Motor neuron (in vitro differentiated cells): ENCODE measurements at regions of chr12 and their contacts with region 1.

Region 1: DNA sequence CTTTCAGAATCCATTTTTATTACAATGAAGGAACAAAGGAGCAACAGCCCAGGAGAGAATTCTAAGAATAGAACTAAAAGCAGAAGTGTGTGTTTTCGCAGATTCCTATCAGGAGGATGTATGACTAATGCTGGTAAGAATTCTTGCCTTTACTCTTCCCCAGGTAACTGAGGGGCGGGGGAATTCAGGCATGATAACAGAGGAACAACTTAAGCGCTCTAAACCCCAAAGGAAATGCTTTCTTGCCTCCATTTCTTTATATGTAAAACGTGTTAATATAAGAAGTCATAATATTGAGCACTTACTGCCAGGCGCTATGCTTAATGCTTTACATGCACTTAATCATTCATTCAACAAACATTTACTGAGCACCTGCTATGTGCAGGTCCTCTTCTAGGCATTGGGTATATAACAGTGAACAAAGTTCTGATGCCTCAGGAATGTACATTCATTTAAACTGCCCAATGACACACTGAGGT is 4.5 kb downstream of the HCAR1 start:
- ATAC-seq: no peak
- H3K4me3 ChIP-seq: no peak overlapping the region
- H3K27ac ChIP-seq: no peak overlapping the region
- H3K4me1 ChIP-seq: no peaks in the 10 kb centered on the region

Region 2: GRCh38 chr12:122646517-122647217 is 79.5 kb before region 1 on chr12:
- in situ Hi-C with region 1: loop called in 1 of 9 experiments (anchors 25 kb)
- ATAC-seq: peak in 3 of 8 experiments; percentile 73 to 91 (median 76)
- H3K4me3 ChIP-seq: no peak overlapping the region
- H3K27ac ChIP-seq: no peak overlapping the region
- H3K4me1 ChIP-seq: peaks cover 0 to 8% of the 10 kb centered on the region in 2 donors

Region 3: DNA sequence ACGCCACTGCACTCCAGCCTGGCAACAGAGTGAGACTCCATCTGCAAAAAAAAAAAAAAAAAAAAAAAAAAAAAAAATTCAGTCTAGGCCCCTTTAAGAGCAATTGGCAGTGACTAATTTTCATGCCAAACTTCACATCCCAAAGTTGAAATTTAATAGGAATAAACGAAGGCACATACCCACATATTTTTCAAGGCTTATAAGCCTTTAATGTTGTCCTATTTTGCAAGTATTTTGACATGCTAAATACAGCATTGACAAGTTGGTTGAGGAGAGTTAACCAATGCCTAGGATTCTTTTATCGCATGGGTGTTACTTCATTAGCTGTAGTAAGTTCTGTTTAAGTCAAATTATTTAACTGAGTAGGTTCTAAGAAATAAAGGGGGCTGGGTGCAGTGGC is 85.7 kb after region 1 on chr12:
- in situ Hi-C with region 1: no loop called
- ATAC-seq: no peak
- H3K4me3 ChIP-seq: no peak overlapping the region
- H3K27ac ChIP-seq: no peak overlapping the region
- H3K4me1 ChIP-seq: no peaks in the 10 kb centered on the region

Region 4: DNA sequence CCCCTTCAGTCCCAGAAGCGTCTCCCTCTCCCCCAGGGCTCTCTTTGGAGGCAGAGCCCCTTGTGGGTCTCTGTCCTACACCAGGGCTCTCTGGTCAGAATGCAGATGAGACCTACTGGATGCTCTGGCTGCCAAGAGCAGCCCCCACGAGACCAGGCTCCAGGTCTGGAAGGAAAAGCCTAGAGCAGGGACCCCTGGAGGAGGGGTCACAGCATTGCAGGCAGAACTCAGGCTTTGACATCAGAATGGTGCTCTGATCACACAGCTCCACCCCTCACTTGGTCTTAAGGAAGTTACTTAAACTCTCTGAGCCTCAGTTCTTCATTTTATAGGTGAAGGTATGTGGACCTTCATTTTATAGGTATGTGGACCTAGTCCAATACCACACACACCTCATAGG is 337.4 kb after region 1 on chr12:
- in situ Hi-C with region 1: no loop called
- ATAC-seq: peak in 2 of 8 experiments; percentile 6 to 47
- H3K4me3 ChIP-seq: no peak overlapping the region
- H3K27ac ChIP-seq: no peak overlapping the region
- H3K4me1 ChIP-seq: peaks cover 10 to 13% of the 10 kb centered on the region in 2 donors